ENCODE measurements at regions of chr9 and their contacts with region 1.

Region 1: GRCh38 chr9:128504485-128505413 is at the start of gene GLE1:
- DNase-seq: peak; percentile 99
- ATAC-seq: peak; percentile 100
- total RNA-seq, gene GLE1: 19.5 TPM

Region 2: DNA sequence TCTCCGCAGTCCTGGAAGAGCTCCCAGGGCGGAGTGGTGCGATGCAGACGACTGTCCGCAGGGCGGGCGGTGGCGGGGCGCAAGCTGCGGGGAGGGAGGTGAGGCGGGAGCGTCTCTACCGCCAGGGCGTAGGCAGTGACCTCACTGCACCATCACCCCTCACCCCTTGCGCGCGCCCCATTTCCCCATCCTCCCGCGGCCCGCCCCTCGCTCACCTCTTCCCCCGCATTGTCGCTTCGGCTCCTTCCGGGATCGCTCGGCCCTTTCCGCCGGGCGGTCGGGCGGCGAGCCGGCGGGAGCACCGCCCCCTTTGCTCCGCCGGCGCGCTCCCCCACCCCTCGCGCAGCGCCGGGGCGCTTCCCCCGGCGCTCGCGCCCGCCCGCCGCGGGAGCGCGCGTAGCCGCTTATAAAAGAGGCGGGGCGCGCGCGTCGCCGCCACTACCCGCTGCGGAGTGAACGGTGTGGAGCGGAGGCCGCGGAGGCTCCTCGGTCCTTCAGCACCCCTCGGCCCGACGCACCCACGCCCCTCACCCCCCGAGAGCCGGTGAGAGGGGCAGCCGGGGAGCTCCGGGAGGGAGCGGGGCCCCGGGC is 47.5 kb after region 1 on chr9 and contains the start of gene SPTAN1:
- intact Hi-C with region 1: loop called (anchors 5 kb)
- DNase-seq: peak; percentile 95
- ATAC-seq: peak; percentile 90
- total RNA-seq, gene SPTAN1: 247 TPM

Region 3: DNA sequence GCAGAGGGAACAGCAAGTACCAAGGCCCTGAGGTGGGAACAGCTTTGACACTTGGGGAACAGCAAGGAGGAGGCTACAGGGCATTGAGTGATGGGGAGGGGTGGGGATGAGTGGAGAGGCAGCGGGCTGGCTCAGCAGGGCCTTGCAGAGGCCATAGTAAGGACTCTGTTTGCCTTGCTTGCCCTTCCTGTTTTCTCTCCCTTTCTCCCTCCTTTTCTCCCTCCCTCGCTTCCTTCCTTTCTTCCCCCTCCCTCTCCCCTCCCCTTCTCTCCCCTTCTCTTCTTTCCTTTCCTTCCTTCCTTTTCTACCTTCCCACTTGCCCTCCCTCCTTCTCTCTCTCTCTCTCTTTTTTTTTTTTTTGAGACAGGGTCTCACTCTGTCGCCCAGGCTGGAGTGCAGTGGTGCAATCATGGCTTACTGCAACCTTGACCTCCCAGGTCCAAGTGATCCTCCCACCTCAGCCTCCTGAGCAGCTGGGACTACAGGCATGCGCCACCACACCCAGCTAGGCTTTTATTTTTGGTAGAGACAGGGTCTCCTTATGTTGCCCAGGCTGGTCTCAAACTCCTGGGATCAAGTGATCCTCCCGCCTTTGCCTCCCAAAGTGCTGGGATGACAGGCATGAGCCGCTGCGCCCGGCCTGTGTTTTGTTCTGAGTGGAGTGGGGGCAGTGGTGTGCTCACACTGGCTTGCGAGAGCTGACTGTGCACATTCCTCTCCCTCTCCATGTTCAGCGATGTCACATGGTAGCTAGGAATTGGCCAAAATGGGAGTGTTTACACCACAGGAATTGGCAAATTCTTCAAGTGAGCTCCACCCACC is 656.2 kb after region 1 on chr9:
- intact Hi-C with region 1: no loop called
- DNase-seq: no peak
- ATAC-seq: no peak